ENCODE measurements at regions of chr6 and their contacts with region 1.

Region 1: GRCh38 chr6:148947621-148948444 is 201.0 kb downstream of the UST start:
- DNase-seq: no peak
- H3K4me3 ChIP-seq: no peak overlapping the region
- CTCF ChIP-seq: peak; percentile 87

Region 2: DNA sequence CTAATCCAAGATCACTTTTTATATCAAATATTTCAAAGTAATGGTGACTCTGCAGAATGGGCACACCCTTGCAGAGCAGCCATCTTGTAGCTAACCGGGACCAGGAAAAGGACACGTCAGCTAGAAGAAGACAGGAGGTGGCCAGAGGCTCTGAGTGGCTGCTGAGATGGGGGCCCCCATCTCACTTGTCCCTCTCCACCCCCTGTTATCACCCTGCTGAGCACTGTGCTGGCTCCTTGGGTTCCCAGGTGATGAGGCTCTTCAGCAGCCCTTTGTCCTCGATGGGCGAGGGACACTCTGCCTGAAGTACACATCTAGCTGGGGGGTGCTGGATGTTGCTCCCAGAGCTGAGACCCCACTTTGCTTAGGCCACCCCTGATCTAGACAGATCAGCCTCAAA is 74.7 kb before region 1 on chr6:
- CTCF ChIA-PET with region 1: no interaction called
- POLR2A ChIA-PET with region 1: no interaction called
- DNase-seq: no peak
- H3K4me3 ChIP-seq: no peak overlapping the region
- CTCF ChIP-seq: no peak

Region 3: GRCh38 chr6:148959004-148959403 is 11.2 kb after region 1 on chr6:
- CTCF ChIA-PET with region 1: interaction called, 14 read pairs
- POLR2A ChIA-PET with region 1: no interaction called
- DNase-seq: no peak
- H3K4me3 ChIP-seq: no peak overlapping the region
- CTCF ChIP-seq: no peak

Measured in AG04449 (cell line).